ENCODE measurements at regions of chr1 and their contacts with region 1.

Region 1: DNA sequence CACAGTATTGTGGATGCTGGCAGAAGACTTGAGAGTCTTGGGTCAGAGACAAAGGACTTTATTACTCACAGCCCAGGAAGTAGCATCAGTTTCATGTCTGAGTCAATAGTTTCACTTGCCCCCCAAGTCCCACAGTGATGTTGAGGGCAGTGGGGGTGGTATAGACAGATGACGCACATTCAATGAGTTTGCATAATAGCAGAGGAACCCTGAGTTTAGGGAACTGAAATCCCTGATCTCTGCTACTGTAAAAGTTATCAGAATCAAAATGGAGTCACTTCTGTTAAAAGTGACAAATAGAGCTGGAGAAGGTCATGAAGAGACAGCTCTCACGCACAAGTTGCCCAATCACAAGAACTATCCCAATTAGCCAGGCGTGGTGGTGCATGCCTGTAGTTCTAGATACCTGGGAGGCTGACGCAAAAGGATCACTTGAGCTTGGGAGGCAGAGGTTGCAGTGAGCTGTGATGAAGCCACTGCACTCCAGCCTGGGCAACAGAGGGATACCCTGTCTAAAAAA is 11.5 kb upstream of the HCRTR1 start:
- DNase-seq: no peak
- H3K4me3 Mint-ChIP-seq: no peak overlapping the region
- H3K27ac Mint-ChIP-seq: no peak overlapping the region
- H3K4me1 Mint-ChIP-seq: peaks cover 9% of the 10 kb centered on the region
- H3K27me3 Mint-ChIP-seq: peaks cover 21% of the 10 kb centered on the region

Region 2: DNA sequence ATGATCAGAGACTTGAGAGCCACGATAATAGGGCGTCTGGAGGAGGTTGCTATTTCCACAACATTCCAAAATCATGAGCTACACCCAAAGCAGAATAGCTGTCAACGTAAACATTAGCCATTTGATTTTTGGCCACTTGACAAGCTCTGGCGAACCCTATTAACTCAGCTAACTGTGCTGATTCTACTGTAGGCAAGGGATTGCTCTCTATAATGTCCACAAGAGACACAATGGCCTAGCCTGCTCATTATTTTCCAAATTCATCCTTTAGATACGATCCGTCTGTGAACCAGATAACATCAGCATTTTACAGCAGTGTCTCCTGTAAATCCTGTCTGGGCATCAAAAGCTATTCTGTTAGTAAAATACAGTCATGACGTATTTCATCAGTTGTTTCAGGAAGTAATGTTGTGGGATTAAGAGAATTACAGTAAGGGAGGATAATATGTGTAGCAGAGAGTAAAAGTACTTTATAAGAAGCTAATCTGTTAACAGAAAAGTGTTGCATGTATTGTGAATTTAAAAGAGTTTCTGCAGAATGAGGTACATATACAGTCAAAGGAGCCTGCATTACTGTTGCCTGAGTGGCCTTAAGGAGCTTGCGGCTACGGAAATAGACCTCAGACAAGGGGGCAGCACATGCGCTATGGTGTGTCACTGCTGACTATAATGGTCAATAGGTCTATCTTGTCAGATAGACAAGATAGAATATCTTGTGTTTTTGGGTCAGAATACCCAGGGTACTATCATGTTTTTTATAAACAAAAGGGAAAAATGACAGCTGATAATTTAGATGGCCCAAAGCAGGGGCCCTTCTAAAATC is 74.6 kb before region 1 on chr1:
- intact Hi-C with region 1: no loop called
- DNase-seq: no peak
- H3K4me3 Mint-ChIP-seq: no peak overlapping the region
- H3K27ac Mint-ChIP-seq: no peak overlapping the region
- H3K4me1 Mint-ChIP-seq: peaks cover 4% of the 10 kb centered on the region
- H3K27me3 Mint-ChIP-seq: peaks cover 31% of the 10 kb centered on the region

Region 3: DNA sequence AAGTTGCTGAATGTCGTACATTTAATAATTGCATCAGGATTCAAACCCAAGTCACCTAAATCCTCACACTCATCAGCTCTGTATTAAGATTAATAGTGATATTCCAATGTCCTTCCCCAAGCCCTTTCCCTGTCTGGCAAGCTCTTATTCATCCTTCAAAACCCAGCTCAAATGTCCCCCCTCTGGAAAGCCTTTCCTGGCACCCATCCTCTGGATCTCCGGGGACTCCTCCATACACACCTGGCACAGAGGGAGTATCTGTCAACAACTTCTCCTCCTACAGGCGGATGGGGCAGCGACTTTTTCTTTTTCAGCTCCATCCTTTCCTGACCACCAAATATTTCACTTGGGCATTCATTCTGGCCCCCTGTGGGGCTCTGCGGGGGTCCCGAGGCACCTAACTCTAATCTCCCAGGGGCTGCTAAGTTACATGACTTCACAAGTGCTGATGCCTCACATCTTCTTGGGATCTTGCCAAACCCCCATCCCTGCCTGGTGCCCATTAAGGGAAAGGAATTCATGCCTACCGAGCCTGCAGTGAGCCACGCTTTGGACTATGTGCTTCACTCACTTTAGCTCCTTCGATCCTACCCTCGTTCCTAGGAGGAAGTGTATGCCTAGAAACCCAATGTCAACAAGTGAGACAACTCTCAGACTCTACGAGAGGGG is 14.4 kb before region 1 on chr1:
- intact Hi-C with region 1: loop called (anchors 2 kb)
- DNase-seq: no peak
- H3K4me3 Mint-ChIP-seq: no peak overlapping the region
- H3K27ac Mint-ChIP-seq: no peak overlapping the region
- H3K4me1 Mint-ChIP-seq: peaks cover 2% of the 10 kb centered on the region
- H3K27me3 Mint-ChIP-seq: peaks cover 26% of the 10 kb centered on the region

Region 4: GRCh38 chr1:31644560-31645273 is 38.7 kb after region 1 on chr1 and contains the start of gene PEF1:
- intact Hi-C with region 1: no loop called
- DNase-seq: peak; percentile 98
- H3K4me3 Mint-ChIP-seq: peak within 1 kb of the TSS; percentile 96
- H3K27ac Mint-ChIP-seq: peak within 1 kb of the TSS; percentile 100
- H3K4me1 Mint-ChIP-seq: peaks cover 15% of the 10 kb centered on the region
- H3K27me3 Mint-ChIP-seq: no peaks in the 10 kb centered on the region
- total RNA-seq, gene PEF1: 56.5 and 61.5 TPM in 2 replicates

Region 5: GRCh38 chr1:31715087-31715872 is 109.3 kb after region 1 on chr1:
- intact Hi-C with region 1: no loop called
- DNase-seq: no peak
- H3K4me3 Mint-ChIP-seq: no peak overlapping the region
- H3K27ac Mint-ChIP-seq: no peak overlapping the region
- H3K4me1 Mint-ChIP-seq: peaks cover 5% of the 10 kb centered on the region
- H3K27me3 Mint-ChIP-seq: peaks cover 53% of the 10 kb centered on the region